Panc1 (cell line): ENCODE measurements at regions of chr18 and their contacts with region 1.

Region 1: DNA sequence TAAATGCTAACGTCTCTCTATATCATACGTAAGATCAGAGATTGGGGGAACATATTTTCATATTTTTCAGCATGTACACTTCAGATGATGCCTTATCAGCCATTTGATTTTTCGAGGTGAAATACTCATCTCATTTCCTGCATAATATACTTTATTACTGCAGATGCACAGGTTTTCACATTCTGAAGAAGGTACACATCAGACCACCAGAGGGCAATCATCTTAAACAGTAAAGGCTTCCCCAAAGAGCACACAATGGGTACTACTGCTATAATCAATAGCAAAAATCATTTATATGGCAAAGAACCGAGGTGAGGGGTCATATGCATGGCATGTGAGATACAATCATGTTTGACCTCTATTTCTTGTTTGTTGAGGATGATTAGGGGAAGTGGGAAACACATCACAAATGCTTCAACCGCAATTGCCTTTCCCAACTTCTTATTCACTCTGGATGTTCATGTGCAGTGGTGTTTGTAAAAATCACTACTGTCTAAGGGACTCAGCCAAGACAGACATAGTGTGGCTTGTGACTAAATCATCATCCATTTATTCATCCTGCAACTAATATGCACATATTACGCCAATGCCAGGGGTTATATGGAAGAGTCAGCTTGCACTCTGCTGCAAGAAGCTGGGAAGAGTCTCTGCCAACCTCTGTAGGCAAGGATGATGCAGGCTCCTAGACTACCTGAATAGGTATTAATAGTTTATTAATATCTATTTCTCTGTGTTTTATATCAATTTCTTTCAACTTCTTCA is 118.7 kb downstream of the EPB41L3 start:
- DNase-seq: no peak
- ATAC-seq: no peak
- H3K4me3 ChIP-seq: no peak overlapping the region
- H3K27ac ChIP-seq: no peak overlapping the region
- H3K4me1 ChIP-seq: no peaks in the 10 kb centered on the region
- H3K27me3 ChIP-seq: no peaks in the 10 kb centered on the region
- CTCF ChIP-seq: peak; percentile 63

Region 2: GRCh38 chr18:5073026-5073944 is 351.8 kb before region 1 on chr18:
- CTCF ChIA-PET with region 1: no interaction called
- POLR2A ChIA-PET with region 1: no interaction called
- in situ Hi-C with region 1: no loop called
- intact Hi-C with region 1: loop called (anchors 10 kb)
- DNase-seq: peak; percentile 17
- ATAC-seq: peak; percentile 86
- H3K4me3 ChIP-seq: no peak overlapping the region
- H3K27ac ChIP-seq: no peak overlapping the region
- H3K4me1 ChIP-seq: no peaks in the 10 kb centered on the region
- H3K27me3 ChIP-seq: no peaks in the 10 kb centered on the region
- CTCF ChIP-seq: peak; percentile 81

Region 3: DNA sequence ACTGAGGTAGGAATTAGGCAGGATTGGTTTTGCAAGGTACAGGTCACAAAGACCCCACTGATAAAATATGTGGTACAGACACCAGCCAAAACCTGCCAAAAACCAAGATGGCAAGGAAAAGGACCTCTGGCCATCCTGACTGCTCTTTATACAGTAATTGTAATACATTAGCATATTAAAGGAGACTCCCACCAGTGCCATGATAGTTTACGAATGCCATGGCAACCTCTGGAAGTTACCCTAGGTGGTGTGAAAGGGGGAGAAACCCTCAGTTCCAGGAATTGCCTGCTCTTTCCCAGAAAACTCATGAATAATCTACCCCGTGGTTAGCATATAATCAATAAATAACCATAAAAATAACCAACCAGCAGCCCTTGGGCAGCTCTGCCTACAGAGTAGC is 248.5 kb after region 1 on chr18:
- CTCF ChIA-PET with region 1: no interaction called
- POLR2A ChIA-PET with region 1: no interaction called
- in situ Hi-C with region 1: no loop called
- intact Hi-C with region 1: no loop called
- DNase-seq: no peak
- ATAC-seq: no peak
- H3K4me3 ChIP-seq: no peak overlapping the region
- H3K27ac ChIP-seq: no peak overlapping the region
- H3K4me1 ChIP-seq: no peaks in the 10 kb centered on the region
- H3K27me3 ChIP-seq: no peaks in the 10 kb centered on the region
- CTCF ChIP-seq: no peak